Right cardiac atrium (tissue), 5 donors: ENCODE measurements at regions of chr1 and their contacts with region 1.

Region 1: GRCh38 chr1:9874959-9875635 is 35.0 kb downstream of the CTNNBIP1 start:
- DNase-seq: peak; percentile 68 to 86 (median 80)
- ATAC-seq: peak; percentile 78 to 83
- H3K4me3 ChIP-seq: no peak overlapping the region
- H3K27ac ChIP-seq: peak overlapping the region; percentile 13
- H3K4me1 ChIP-seq: peaks cover 11% of the 10 kb centered on the region
- H3K27me3 ChIP-seq: no peaks in the 10 kb centered on the region

Region 2: GRCh38 chr1:9910425-9911178 is 35.5 kb after region 1 on chr1:
- intact Hi-C with region 1: loop called in 2 of 4 experiments (anchors 2 to 5 kb)
- DNase-seq: peak; percentile 100
- ATAC-seq: peak; percentile 99
- H3K4me3 ChIP-seq: peak overlapping the region; percentile 72
- H3K27ac ChIP-seq: peak overlapping the region; percentile 98
- H3K4me1 ChIP-seq: peaks cover 2% of the 10 kb centered on the region
- H3K27me3 ChIP-seq: no peaks in the 10 kb centered on the region

Region 3: GRCh38 chr1:9942939-9943788 is 68.1 kb after region 1 on chr1 and contains the starts of genes LZIC and NMNAT1:
- intact Hi-C with region 1: loop called in 2 of 4 experiments (anchors 2 to 10 kb)
- DNase-seq: peak; percentile 94 to 97 (median 97)
- ATAC-seq: peak; percentile 99
- H3K4me3 ChIP-seq: peak within 1 kb of the TSS; percentile 78
- H3K27ac ChIP-seq: peak within 1 kb of the TSS; percentile 70
- H3K4me1 ChIP-seq: no peaks in the 10 kb centered on the region
- H3K27me3 ChIP-seq: no peaks in the 10 kb centered on the region
- total RNA-seq, gene LZIC: 30.5 to 36.9 (median 33.8) TPM
- total RNA-seq, gene NMNAT1: 15.5 to 19.1 (median 18.1) TPM